ENCODE measurements at regions of chr2 and their contacts with region 1.

Region 1: GRCh38 chr2:237026981-237027711 is 58.5 kb upstream of the COPS8 start:
- DNase-seq: peak; percentile 34
- H3K4me3 ChIP-seq: no peak overlapping the region
- CTCF ChIP-seq: peak; percentile 92

Region 2: DNA sequence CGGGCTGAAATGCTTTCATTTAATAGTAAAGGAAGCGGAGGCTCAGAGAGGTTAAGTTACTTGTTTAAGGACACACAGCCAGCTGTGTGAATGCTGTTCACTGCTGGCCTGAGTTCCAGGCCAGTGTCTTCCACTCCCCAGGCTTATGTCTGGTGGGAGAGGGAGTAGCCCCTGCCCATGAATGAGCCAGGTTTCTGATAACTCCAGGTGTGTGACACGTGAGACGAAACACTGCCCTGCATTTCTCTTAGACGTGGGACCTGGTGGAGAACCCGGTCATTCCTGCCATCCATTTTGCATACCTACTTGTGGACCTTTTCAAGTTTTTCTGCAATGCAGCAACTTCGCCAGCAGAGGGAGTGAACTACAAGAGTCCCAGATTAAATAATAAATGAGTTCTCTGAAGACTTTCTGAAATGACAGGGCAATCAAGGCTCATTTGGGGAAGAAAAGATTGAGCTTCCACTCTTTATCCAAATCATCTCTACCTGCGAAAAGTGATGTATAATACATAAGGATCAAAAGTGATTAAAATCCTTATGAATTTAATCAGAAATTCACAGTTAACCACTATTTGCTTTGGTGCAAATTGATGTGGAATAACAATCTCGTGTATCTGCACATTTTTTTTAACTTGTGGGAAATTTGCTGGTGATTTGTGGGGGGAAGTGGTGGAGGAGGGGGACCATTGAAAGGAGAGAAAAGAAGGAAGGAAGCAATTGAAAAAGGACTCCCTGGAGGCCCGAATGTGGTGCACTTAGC is 683.6 kb before region 1 on chr2:
- CTCF ChIA-PET with region 1: interaction called, 18 read pairs
- POLR2A ChIA-PET with region 1: no interaction called
- DNase-seq: peak; percentile 38
- H3K4me3 ChIP-seq: no peak overlapping the region
- CTCF ChIP-seq: peak; percentile 56

Region 3: GRCh38 chr2:236512902-236513435 is 514.2 kb before region 1 on chr2:
- CTCF ChIA-PET with region 1: interaction called, 102 read pairs
- POLR2A ChIA-PET with region 1: no interaction called
- DNase-seq: no peak
- H3K4me3 ChIP-seq: no peak overlapping the region
- CTCF ChIP-seq: peak; percentile 80

Region 4: GRCh38 chr2:237039301-237040031 is 12.3 kb after region 1 on chr2:
- CTCF ChIA-PET with region 1: interaction called, 11 read pairs
- POLR2A ChIA-PET with region 1: no interaction called
- DNase-seq: no peak
- H3K4me3 ChIP-seq: no peak overlapping the region
- CTCF ChIP-seq: no peak

Region 5: DNA sequence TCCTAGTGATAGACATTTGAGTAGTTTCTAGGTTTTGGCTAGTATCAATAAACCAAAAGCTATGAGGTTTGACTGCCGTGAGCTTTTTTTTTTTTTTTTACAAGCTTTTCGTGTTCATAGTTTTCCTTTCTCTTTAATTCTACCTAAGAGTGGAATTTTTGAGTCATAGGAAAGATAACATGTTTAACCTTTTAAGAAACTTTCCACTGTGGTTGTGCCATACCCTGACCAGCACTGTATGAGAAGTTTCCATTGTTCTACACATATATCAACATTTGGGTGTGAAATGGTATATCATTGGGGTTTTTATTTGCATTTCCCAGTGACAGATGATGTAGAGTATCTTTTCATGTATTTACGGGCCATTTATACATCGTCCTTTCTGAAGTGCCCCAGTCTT is 971.4 kb after region 1 on chr2:
- CTCF ChIA-PET with region 1: no interaction called
- POLR2A ChIA-PET with region 1: no interaction called
- DNase-seq: no peak
- H3K4me3 ChIP-seq: no peak overlapping the region
- CTCF ChIP-seq: no peak

Measured in AG04449 (cell line).